Upper lobe of right lung (tissue), 1 donor: ENCODE measurements at regions of chr13 and their contacts with region 1.

Region 1: DNA sequence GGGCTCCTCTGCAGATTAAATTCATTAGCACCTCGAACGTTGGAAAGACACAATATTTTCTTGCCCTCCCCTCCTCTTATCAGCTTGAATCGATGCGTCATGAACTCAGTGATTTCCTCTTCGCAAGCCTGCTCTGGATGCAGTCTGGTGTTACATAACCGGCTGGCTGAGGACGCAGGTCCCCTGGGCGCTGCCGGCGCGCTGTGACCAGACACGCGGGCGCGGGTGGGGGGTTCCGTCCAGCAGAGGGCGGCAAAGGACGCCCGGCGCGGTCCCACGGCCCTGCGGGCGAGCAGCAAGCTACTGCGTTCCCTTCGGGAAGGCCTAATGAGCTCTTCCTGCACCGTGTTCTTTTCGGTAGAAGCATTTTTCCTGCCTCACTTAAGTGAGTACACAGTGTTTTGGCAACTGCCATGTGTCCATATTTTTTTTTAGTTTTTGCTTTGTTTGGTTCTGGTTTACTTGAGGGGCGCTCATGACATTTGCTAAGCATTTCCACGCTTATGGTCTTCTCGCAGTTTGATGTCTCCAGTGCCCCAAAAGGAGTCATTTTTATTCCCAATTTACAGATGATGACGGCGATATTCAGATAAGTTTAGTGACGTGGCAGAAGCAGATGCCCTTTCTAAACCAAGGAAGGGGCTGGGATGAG is 112.2 kb upstream of the MBNL2 start:
- DNase-seq: peak; percentile 95
- ATAC-seq: peak; percentile 99
- H3K4me3 ChIP-seq: no peak overlapping the region
- H3K27ac ChIP-seq: no peak overlapping the region
- H3K4me1 ChIP-seq: peaks cover 26% of the 10 kb centered on the region
- H3K27me3 ChIP-seq: no peaks in the 10 kb centered on the region
- CTCF ChIP-seq: peak; percentile 97

Region 2: GRCh38 chr13:97212601-97213040 is 102.7 kb after region 1 on chr13:
- intact Hi-C with region 1: loop called (anchors 10 kb)
- DNase-seq: no peak
- ATAC-seq: peak; percentile 89
- H3K4me3 ChIP-seq: no peak overlapping the region
- H3K27ac ChIP-seq: no peak overlapping the region
- H3K4me1 ChIP-seq: peaks cover 6% of the 10 kb centered on the region
- H3K27me3 ChIP-seq: no peaks in the 10 kb centered on the region
- CTCF ChIP-seq: peak; percentile 63

Region 3: GRCh38 chr13:97295283-97296182 is 185.6 kb after region 1 on chr13:
- intact Hi-C with region 1: no loop called
- DNase-seq: no peak
- ATAC-seq: no peak
- H3K4me3 ChIP-seq: no peak overlapping the region
- H3K27ac ChIP-seq: no peak overlapping the region
- H3K4me1 ChIP-seq: peaks cover 12% of the 10 kb centered on the region
- H3K27me3 ChIP-seq: no peaks in the 10 kb centered on the region
- CTCF ChIP-seq: no peak

Region 4: GRCh38 chr13:97344265-97345175 is 234.6 kb after region 1 on chr13:
- intact Hi-C with region 1: loop called (anchors 10 kb)
- DNase-seq: no peak
- ATAC-seq: peak; percentile 87
- H3K4me3 ChIP-seq: no peak overlapping the region
- H3K27ac ChIP-seq: no peak overlapping the region
- H3K4me1 ChIP-seq: peaks cover 20% of the 10 kb centered on the region
- H3K27me3 ChIP-seq: no peaks in the 10 kb centered on the region
- CTCF ChIP-seq: peak; percentile 71

Region 5: GRCh38 chr13:98141509-98142379 is 1031.8 kb after region 1 on chr13:
- intact Hi-C with region 1: no loop called
- DNase-seq: no peak
- ATAC-seq: peak; percentile 25
- H3K4me3 ChIP-seq: peak overlapping the region; percentile 62
- H3K27ac ChIP-seq: peak overlapping the region; percentile 74
- H3K4me1 ChIP-seq: peaks cover 18% of the 10 kb centered on the region
- H3K27me3 ChIP-seq: no peaks in the 10 kb centered on the region
- CTCF ChIP-seq: no peak